ENCODE measurements at regions of chr9 and their contacts with region 1.

Region 1: GRCh38 chr9:112333639-112334431 is 416 bp upstream of the PTBP3 start:
- DNase-seq: peak; percentile 96 to 98
- ATAC-seq: peak; percentile 96
- H3K4me3 ChIP-seq: peak overlapping the region; percentile 89 to 93
- H3K27ac ChIP-seq: peak overlapping the region; percentile 29 to 52
- H3K4me1 ChIP-seq: peaks cover 0 to 1% of the 10 kb centered on the region in 2 donors
- H3K27me3 ChIP-seq: no peaks in the 10 kb centered on the region

Region 2: DNA sequence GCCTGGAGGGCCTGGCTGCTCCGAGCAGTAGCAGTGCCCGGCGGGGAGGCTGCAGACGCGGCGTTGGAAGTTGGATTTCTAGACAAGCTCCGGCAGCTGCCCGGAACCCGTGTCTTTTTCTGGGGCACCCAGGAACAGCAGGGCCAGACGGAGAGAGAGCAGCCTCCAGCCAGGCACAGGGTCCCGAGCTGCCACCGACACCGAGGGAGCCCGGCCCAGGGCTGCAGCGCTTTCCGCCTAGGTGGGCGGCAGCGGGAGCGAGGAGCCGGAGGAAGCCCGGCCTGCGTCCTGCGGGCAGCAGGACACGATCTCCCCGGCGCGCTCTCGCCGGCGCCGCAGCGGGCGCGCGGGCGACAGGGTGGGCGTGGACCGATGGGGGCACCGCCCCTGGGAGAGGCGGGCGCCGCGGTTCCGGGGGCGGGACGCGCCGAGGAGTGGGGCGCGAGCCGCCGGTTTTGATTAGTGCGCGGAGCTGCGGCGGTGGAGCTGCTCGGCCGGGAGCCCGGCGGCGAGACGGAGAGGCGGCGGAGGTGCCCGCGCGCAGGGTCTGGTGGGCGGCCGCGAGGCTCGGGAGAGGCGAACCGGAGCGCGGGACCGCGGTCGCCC is 437.4 kb before region 1 on chr9 and contains the start of gene UGCG:
- intact Hi-C with region 1: loop called in 1 of 2 experiments (anchors 5 kb)
- DNase-seq: peak; percentile 93 to 96
- ATAC-seq: peak; percentile 98
- H3K4me3 ChIP-seq: peak within 1 kb of the TSS; percentile 43 to 76
- H3K27ac ChIP-seq: peak within 1 kb of the TSS; percentile 38 to 79
- H3K4me1 ChIP-seq: peaks cover 3% of the 10 kb centered on the region in 2 donors
- H3K27me3 ChIP-seq: no peaks in the 10 kb centered on the region
- total RNA-seq, gene UGCG: 36.6 to 51.2 TPM

Region 3: DNA sequence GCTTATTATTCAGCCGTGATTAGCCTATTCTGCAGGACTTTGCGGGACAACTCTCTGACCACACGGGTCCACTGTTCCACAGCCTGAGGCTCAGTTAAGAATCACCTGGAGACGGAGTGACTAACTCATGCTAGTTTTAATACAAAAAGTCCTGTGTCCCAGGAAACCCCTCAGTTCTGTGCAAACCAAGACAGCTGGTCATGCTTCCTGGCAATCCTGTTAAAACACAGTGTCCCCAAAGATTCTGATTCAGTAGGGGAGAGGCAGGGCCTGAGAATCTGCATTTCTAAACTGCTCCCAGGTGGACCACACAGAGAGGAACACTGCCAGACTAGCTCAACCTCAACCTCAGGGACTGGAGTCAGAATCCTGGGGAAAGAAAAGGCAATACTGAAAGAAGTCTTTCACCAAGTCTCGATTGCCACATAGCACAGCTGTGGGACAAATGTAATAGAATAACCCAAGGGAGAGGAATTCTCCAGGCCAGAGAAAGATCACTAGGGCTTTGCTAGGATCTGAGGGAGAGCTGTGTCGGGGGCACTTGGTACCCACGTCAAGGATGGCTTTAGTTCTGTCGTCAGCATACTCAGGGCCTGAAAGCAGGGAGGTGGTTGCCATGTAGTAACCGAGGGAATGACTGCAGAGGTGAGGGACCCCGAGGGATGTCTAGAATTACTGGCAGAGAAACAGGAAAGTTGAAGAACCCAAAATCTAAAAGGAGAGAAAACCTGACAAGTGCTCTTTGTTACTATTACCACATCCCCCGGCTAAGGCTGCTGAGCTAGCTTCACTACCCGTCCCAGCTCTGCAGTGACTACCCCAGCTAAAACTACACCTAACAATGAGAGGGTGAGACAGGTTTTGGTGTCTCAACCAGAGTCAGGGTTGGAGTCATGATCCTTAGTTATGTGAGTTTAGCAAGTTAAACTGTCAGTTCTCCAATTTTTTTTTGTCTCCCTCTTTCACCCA is 167.4 kb before region 1 on chr9:
- intact Hi-C with region 1: loop called (anchors 5 to 10 kb)
- DNase-seq: no peak
- ATAC-seq: peak; percentile 63
- H3K4me3 ChIP-seq: no peak overlapping the region
- H3K27ac ChIP-seq: no peak overlapping the region
- H3K4me1 ChIP-seq: no peaks in the 10 kb centered on the region
- H3K27me3 ChIP-seq: no peaks in the 10 kb centered on the region

Region 4: GRCh38 chr9:112174218-112174964 is 159.4 kb before region 1 on chr9:
- intact Hi-C with region 1: loop called (anchors 5 to 10 kb)
- DNase-seq: peak; percentile 78 to 92
- ATAC-seq: peak; percentile 81
- H3K4me3 ChIP-seq: peak overlapping the region; percentile 83 to 97
- H3K27ac ChIP-seq: no peak overlapping the region
- H3K4me1 ChIP-seq: peaks cover 0 to 2% of the 10 kb centered on the region in 2 donors
- H3K27me3 ChIP-seq: no peaks in the 10 kb centered on the region

Region 5: GRCh38 chr9:112295174-112295573 is 38.7 kb before region 1 on chr9:
- intact Hi-C with region 1: no loop called
- DNase-seq: no peak
- ATAC-seq: no peak
- H3K4me3 ChIP-seq: no peak overlapping the region
- H3K27ac ChIP-seq: no peak overlapping the region
- H3K4me1 ChIP-seq: no peaks in the 10 kb centered on the region
- H3K27me3 ChIP-seq: no peaks in the 10 kb centered on the region

Region 6: GRCh38 chr9:112421771-112422222 is 88.0 kb after region 1 on chr9:
- intact Hi-C with region 1: no loop called
- DNase-seq: no peak
- ATAC-seq: no peak
- H3K4me3 ChIP-seq: no peak overlapping the region
- H3K27ac ChIP-seq: no peak overlapping the region
- H3K4me1 ChIP-seq: no peaks in the 10 kb centered on the region
- H3K27me3 ChIP-seq: no peaks in the 10 kb centered on the region